ENCODE measurements at regions of chr2 and their contacts with region 1.

Region 1: DNA sequence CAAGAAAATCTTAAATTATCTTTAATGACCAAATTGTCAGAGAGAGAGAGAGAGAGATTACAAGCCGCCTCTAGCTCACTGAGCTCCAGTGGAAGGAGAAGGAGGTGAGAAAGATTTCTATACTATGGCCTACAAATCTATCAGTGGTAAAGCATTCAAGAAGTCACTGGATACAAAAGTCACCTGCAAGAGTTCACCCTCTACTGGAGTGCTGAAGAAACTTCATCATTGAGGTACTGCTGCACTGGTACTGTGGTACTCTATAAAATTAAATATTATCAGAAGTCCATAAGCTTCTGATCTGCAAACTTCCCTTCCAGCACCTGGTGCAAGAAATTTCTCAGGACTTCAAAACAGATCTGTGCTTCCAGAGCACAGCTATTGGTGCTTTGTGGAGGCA is 48.3 kb upstream of the AGPS start:
- DNase-seq: no peak
- ATAC-seq: no peak
- H3K4me3 ChIP-seq: no peak overlapping the region
- H3K27ac ChIP-seq: no peak overlapping the region
- H3K4me1 ChIP-seq: no peaks in the 10 kb centered on the region
- H3K27me3 ChIP-seq: no peaks in the 10 kb centered on the region

Region 2: GRCh38 chr2:177763532-177764265 is 419.4 kb after region 1 on chr2:
- intact Hi-C with region 1: loop called (anchors 5 to 10 kb)
- DNase-seq: peak; percentile 78 to 85
- ATAC-seq: peak; percentile 81
- H3K4me3 ChIP-seq: no peak overlapping the region
- H3K27ac ChIP-seq: no peak overlapping the region
- H3K4me1 ChIP-seq: no peaks in the 10 kb centered on the region
- H3K27me3 ChIP-seq: no peaks in the 10 kb centered on the region